ENCODE measurements at regions of chr3 and their contacts with region 1.

Region 1: DNA sequence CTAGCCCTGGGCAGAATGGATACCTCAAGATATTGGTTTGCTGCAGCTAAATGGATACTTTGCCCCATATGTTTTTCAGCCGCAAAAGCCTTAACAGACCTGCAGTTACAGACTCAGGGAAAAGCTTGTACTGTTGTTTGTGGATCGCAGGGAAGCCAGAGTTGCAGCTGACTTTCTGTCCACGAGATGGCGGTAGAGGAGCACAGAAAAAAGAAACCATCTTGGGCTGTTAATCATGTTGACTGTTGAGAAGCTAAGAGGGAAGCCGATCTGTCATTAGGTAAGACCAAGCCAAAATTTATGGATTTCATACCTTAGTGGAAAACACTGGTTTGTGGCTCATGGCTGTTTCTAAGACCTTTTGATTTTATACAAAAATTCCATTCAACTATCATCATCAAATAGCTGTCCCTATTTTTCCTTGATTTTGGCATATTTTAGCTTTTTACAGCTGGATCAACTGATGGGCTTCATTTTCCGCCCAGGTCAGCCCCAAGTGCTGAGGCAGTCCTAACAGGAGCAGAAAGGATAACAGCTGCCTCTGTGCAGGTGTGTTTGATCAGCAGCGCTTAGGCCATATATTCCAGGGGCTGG is 205.7 kb upstream of the ZPLD1 start:
- DNase-seq: peak; percentile 88
- H3K4me3 Mint-ChIP-seq: no peak overlapping the region
- H3K27ac Mint-ChIP-seq: no peak overlapping the region
- H3K4me1 Mint-ChIP-seq: peaks cover 16% of the 10 kb centered on the region
- H3K27me3 Mint-ChIP-seq: no peaks in the 10 kb centered on the region

Region 2: GRCh38 chr3:101809178-101810021 is 419.8 kb before region 1 on chr3:
- CTCF ChIA-PET with region 1: interaction called, 380 read pairs
- intact Hi-C with region 1: loop called (anchors 1 kb)
- DNase-seq: peak; percentile 49
- H3K4me3 Mint-ChIP-seq: no peak overlapping the region
- H3K27ac Mint-ChIP-seq: no peak overlapping the region
- H3K4me1 Mint-ChIP-seq: peaks cover 46% of the 10 kb centered on the region
- H3K27me3 Mint-ChIP-seq: no peaks in the 10 kb centered on the region

Region 3: GRCh38 chr3:101827211-101828174 is 401.7 kb before region 1 on chr3:
- CTCF ChIA-PET with region 1: interaction called, 13 read pairs
- intact Hi-C with region 1: no loop called
- DNase-seq: peak; percentile 94
- H3K4me3 Mint-ChIP-seq: peak overlapping the region; percentile 77
- H3K27ac Mint-ChIP-seq: peak overlapping the region; percentile 94
- H3K4me1 Mint-ChIP-seq: peaks cover 60% of the 10 kb centered on the region
- H3K27me3 Mint-ChIP-seq: no peaks in the 10 kb centered on the region

Region 4: GRCh38 chr3:102248981-102249705 is 20.0 kb after region 1 on chr3:
- CTCF ChIA-PET with region 1: interaction called, 10 read pairs
- intact Hi-C with region 1: no loop called
- DNase-seq: no peak
- H3K4me3 Mint-ChIP-seq: no peak overlapping the region
- H3K27ac Mint-ChIP-seq: no peak overlapping the region
- H3K4me1 Mint-ChIP-seq: no peaks in the 10 kb centered on the region
- H3K27me3 Mint-ChIP-seq: peaks cover 2% of the 10 kb centered on the region

Region 5: GRCh38 chr3:102536456-102536855 is 307.3 kb after region 1 on chr3:
- CTCF ChIA-PET with region 1: interaction called, 146 read pairs
- intact Hi-C with region 1: loop called (anchors 1 kb)
- DNase-seq: no peak
- H3K4me3 Mint-ChIP-seq: no peak overlapping the region
- H3K27ac Mint-ChIP-seq: no peak overlapping the region
- H3K4me1 Mint-ChIP-seq: no peaks in the 10 kb centered on the region
- H3K27me3 Mint-ChIP-seq: peaks cover 2% of the 10 kb centered on the region

Measured in activated naive CD4-positive, alpha-beta T cell treated with anti-CD3 and anti-CD28 coated beads for 36 hours (primary cell).